Cardiac septum (tissue), 1 donor: ENCODE measurements at regions of chr16 and their contacts with region 1.

Region 1: DNA sequence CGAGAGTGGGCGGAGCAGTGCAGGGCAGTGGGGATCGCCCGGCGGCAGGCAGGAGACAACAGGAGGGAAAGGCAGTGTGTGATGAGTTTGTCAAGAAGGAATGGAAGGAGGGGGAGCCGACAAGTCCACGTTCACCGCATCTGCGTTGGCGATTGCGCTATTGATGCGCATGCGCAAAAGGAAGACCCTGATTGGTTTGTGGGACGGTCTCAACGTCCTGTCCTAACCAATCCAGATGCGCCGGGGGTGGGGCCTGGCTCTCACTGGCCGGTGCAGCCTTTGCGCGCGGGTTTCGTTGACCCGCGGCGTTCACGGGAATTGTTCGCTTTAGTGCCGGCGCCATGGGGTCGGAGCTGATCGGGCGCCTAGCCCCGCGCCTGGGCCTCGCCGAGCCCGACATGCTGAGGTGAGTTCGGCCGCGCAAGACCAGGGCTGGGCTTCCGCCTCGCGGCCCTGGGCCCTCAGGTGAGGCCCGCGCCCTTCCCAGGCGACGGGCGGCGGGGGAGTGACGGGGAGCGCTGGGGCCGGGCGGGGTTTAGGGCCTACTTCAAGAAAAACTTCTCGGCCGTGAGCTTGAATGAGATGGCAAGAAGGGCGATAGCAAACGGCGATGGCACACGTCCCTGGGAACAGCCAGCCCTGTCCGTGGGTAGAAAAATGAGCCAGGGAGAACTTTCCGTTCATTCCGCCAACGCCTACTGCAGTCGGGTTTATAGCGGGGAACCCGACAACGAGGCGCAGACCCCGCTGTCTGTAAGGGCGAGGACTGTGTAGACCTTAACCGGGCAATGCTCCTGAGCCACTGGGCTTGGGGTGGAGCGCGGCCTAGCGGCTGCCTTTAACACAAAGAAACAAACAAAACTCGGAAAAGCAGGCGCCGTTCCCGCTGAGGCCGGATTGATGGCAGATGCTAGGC is at the start of gene ORC6:
- DNase-seq: peak; percentile 99
- total RNA-seq, gene ORC6: 3.0 TPM

Region 2: DNA sequence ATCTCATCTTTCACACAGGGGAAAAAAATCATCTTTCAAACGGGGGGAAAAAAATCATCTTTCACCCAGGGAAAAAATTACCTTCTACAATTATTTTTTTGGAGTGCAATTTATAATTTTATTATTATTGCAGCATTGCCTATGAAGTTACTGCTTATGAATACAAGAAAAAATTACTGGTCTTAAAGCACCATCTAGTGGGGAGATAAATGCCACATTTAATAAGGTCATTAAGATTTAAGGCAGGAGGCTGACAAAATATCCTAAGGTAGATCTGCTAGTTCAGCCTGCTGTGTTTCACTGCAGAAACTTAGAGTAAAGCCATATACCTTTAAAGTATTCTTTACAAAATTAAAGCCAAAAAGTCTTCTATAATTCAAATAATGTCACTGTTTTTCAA is 82.1 kb before region 1 on chr16:
- intact Hi-C with region 1: no loop called
- DNase-seq: no peak

Region 3: GRCh38 chr16:46649928-46650623 is 39.5 kb before region 1 on chr16:
- intact Hi-C with region 1: no loop called
- DNase-seq: no peak

Region 4: DNA sequence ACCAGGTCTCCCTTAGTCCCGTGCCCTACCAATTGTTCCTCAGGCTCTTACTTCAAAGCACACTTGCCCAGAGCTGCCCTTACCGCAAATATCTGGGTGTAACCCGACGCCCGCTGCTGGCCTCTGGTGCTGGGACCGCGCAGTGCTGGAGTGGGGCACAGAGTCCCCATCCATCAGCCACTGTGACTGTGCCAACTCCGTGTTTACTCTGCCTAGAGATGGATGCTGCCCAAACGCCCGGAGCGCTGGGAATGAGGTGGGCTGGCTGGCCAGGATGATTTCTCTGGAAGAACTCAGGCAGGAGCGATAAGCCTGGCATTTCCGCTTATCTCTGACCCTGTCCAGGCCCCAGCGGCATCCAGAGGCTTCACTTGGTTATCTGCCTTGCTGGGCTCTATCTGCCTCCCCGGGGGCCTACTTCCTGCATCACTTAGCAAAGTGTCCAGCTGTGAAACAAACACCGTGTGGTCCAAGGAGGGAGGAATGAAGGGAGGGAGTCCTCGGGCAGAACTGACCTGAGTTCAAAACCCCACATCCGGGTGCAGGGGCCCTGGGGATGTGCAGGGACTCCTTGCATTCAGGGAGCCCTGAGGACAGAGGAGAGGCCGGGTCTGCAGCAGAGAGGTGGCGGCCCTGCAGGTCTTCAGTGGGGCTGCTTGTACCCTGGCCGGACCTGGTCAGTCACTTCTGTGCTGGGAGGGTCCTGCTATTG is 67.9 kb after region 1 on chr16:
- intact Hi-C with region 1: loop called (anchors 5 kb)
- DNase-seq: peak; percentile 91

Region 5: DNA sequence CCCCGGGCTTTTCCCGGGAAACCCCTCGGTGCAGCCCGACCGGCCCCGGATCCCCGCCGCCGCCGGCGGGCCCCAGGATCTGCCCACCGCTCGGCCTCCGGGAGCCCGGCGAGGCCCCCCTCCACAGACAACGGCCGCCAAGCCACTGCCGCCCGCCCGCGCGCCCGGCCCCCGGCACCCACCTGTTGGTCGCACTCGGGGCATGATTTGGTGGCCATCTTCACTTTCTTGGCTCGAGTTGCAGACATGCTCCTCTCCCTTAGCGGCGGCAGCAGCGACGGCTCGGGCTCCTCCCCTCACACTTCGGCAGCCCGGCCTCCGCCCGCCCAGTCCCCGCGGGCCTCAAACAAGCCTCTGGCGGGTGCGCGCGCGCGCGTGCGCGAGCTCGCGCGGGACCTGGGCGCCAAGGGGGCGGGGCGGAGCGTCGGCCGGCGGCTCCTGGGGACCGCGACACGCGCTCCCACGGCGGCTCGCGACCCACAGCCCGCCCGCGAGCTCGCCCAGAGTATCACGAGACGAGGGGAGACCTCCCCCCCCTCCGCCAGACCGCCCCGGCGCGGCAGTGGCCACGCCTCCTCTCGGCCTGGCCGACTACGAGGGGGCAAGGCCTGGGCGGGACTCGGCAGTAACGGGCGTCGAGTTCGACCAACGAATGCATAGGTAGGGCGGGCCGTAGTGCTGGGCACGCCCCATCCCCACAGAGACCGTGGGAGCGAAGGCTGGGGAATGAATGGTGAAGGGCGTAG is 141.5 kb after region 1 on chr16 and contains the start of gene C16orf87:
- intact Hi-C with region 1: loop called (anchors 2 kb)
- DNase-seq: peak; percentile 98
- total RNA-seq, gene C16orf87: 13.6 TPM